Upper lobe of right lung (tissue), 1 donor: ENCODE measurements at regions of chr9 and their contacts with region 1.

Region 1: GRCh38 chr9:70587201-70587600 is 172.7 kb upstream of the KLF9 start:
- DNase-seq: no peak
- ATAC-seq: peak; percentile 38
- H3K4me3 ChIP-seq: no peak overlapping the region
- H3K27ac ChIP-seq: peak overlapping the region; percentile 18
- H3K4me1 ChIP-seq: peaks cover 17% of the 10 kb centered on the region
- H3K27me3 ChIP-seq: no peaks in the 10 kb centered on the region
- CTCF ChIP-seq: no peak

Region 2: DNA sequence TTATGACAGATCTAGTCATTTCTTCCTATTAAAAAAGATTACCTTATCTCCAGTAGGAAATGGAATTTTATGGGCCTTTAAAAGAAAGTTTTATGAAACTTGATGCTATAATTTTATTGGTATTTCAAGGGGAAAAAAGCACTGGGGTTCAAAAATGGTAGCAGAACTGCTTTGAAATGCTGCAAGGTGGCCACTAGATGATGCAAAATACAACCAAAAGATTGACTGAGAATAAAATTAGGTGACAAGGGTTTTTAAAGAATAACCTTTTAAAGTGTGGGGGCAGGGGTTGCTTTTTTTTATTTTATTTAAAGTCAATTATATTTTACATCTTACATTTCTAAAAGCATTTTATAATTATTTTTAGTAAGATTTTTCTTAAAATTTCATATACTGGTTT is 234.4 kb before region 1 on chr9:
- intact Hi-C with region 1: no loop called
- DNase-seq: no peak
- ATAC-seq: no peak
- H3K4me3 ChIP-seq: no peak overlapping the region
- H3K27ac ChIP-seq: no peak overlapping the region
- H3K4me1 ChIP-seq: no peaks in the 10 kb centered on the region
- H3K27me3 ChIP-seq: no peaks in the 10 kb centered on the region
- CTCF ChIP-seq: peak; percentile 64

Region 3: DNA sequence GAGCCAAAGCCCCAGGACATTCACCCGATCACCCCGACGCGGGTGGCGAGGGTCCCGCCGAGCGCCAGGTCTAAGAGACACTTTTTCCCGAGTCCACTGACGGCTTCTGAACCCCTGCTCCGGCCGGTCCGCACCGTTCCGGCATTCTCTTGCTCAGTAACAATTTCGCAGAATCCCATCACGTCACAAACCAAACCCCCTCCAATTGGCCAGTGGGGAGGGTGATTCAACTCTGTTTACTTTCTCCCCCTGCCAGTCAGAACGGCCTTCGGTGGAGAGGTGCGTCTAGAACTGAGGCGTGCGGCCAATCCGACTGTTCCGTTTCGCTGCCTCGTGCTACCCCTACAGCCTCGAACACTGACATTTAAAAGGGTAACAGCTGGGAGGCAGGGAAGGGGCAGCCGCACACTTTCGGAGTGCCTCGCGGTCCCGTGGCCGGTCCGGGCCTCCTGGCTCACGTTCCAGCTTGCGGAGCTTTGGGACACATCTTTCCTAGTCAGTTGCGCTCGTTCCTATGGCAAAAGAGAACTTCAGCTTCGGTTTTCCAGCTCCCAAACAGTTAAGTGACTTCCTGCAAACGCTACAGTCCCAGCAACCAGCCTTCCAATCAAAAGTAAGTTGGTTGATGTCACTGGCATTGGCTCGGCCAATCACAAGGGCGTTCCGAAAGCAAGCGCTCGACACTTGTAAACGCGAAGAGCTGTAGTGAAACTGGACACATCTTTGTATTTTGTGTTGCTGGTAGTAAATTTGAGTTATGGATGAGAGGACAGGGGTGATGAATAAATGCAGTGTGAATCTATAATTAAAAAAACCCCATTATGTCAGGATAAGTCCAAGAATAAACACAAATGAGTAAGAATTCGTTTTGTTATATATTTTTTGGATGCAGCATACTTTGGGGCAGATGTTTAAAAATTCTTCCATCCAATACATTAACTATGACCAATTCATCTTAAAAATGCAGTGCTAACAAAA is 173.1 kb before region 1 on chr9 and contains the start of gene KLF9:
- intact Hi-C with region 1: loop called (anchors 10 kb)
- DNase-seq: peak; percentile 95
- ATAC-seq: peak; percentile 81
- H3K4me3 ChIP-seq: peak within 1 kb of the TSS; percentile 89
- H3K27ac ChIP-seq: peak within 1 kb of the TSS; percentile 100
- H3K4me1 ChIP-seq: peaks cover 50% of the 10 kb centered on the region
- H3K27me3 ChIP-seq: no peaks in the 10 kb centered on the region
- CTCF ChIP-seq: no peak
- total RNA-seq, gene KLF9: 91.0 TPM